ENCODE measurements at regions of chr3 and their contacts with region 1.

Region 1: GRCh38 chr3:129120254-129121004 is 1.2 kb downstream of the RAB43 start:
- DNase-seq: peak; percentile 98
- H3K4me3 Mint-ChIP-seq: peak overlapping the region; percentile 94
- H3K27ac Mint-ChIP-seq: peak overlapping the region; percentile 99
- H3K4me1 Mint-ChIP-seq: peaks cover 51% of the 10 kb centered on the region
- H3K27me3 Mint-ChIP-seq: no peaks in the 10 kb centered on the region

Region 2: DNA sequence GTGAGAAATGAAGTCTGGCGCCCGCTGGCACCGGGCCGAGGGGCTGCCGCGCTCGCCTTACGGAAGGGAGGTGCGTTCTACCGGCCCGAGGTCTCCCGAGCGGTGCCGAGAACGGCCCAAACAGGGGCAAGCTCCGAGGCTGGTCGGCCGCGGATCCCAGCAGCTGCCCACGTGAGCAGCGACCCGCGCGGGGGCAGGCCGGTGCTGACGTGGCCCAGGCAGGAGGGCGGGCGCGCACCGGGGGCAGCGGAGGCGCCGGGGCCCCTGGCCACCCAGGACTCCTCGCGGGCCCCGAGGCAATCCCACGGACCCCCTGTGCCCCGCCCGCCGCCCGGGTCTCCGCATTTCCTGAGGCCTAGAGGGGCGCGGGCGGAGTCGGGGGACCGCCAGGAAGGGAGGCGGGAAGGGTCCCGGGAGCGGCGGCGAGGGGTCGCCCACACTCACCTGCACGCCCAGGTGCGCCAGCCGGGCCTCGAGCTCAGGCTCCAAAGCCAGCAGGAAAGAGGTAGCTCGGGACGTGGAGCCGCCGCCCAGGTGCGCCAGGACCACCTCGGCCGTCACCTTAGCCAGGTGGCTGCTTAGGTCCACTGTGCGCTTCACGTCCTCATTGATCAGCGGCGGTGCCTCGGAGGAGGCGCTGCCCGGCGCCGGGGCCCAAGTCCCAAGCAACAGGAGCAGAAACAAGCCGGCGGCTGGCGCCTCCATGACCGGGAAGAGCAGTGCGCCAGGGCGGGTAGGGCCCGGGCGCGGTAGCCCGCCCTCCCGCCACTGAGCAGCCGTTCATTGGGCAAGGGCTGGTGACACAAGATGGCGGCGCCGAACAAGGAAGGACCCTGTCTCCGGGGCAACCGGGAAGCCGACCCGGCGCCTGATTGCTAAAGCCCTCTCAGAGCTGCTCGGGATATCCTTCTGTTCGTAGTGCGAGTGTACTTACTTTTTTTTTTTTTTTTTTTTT is 470.1 kb before region 1 on chr3 and contains the start of gene RPN1:
- intact Hi-C with region 1: loop called (anchors 1 kb)
- DNase-seq: peak; percentile 98
- H3K4me3 Mint-ChIP-seq: peak within 1 kb of the TSS; percentile 88
- H3K27ac Mint-ChIP-seq: peak within 1 kb of the TSS; percentile 92
- H3K4me1 Mint-ChIP-seq: peaks cover 32% of the 10 kb centered on the region
- H3K27me3 Mint-ChIP-seq: no peaks in the 10 kb centered on the region
- total RNA-seq, gene RPN1: 192 and 194 TPM in 2 replicates

Region 3: GRCh38 chr3:129052675-129053074 is 67.8 kb before region 1 on chr3:
- intact Hi-C with region 1: loop called (anchors 2 kb)
- DNase-seq: no peak
- H3K4me3 Mint-ChIP-seq: no peak overlapping the region
- H3K27ac Mint-ChIP-seq: no peak overlapping the region
- H3K4me1 Mint-ChIP-seq: peaks cover 9% of the 10 kb centered on the region
- H3K27me3 Mint-ChIP-seq: peaks cover 14% of the 10 kb centered on the region

Region 4: GRCh38 chr3:129183569-129184395 is 63.4 kb after region 1 on chr3 and contains the start of gene CNBP:
- intact Hi-C with region 1: loop called (anchors 1 kb)
- DNase-seq: peak; percentile 98
- H3K4me3 Mint-ChIP-seq: peak within 1 kb of the TSS; percentile 96
- H3K27ac Mint-ChIP-seq: peak within 1 kb of the TSS; percentile 99
- H3K4me1 Mint-ChIP-seq: peaks cover 33% of the 10 kb centered on the region
- H3K27me3 Mint-ChIP-seq: no peaks in the 10 kb centered on the region
- total RNA-seq, gene CNBP: 422 and 430 TPM in 2 replicates

Region 5: DNA sequence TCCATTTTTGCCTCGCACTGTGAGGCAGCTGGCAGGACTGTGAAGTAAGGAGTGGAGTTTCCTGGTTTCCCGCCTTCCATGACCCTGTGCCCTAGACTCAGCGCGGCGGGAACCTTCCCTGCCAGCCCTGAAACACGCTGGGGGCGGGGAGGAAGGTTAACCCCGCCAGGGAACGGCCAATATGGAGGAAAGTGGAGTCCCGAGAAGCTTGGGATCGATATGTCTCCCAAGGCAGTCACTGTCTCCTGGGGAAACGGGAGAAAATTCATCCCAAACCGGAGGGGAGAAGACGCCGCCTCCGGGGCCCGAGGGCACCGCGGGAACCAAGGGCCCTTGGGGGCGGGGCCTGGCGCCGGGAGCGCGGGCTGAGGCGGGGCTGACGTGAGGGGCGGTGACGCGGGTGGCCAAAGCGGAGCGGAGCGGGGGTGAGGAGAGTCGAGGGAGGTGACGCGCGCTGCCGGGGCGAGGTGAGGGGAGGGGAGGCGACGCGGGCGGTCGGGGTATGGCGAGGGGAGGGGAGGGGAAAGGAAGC is 158.1 kb after region 1 on chr3 and contains the start of gene HMCES:
- intact Hi-C with region 1: loop called (anchors 2 kb)
- DNase-seq: peak; percentile 99
- H3K4me3 Mint-ChIP-seq: peak within 1 kb of the TSS; percentile 99
- H3K27ac Mint-ChIP-seq: peak within 1 kb of the TSS; percentile 96
- H3K4me1 Mint-ChIP-seq: peaks cover 43% of the 10 kb centered on the region
- H3K27me3 Mint-ChIP-seq: no peaks in the 10 kb centered on the region
- total RNA-seq, gene HMCES: 58.3 and 62.6 TPM in 2 replicates